BJ (cell line): ENCODE measurements at regions of chr19 and their contacts with region 1.

Region 1: GRCh38 chr19:4889034-4889815 is 13.5 kb downstream of the ARRDC5 start:
- DNase-seq: peak; percentile 38
- H3K4me3 ChIP-seq: no peak overlapping the region
- H3K27me3 ChIP-seq: no peaks in the 10 kb centered on the region
- CTCF ChIP-seq: no peak

Region 2: GRCh38 chr19:4534836-4535658 is 354.2 kb before region 1 on chr19 and contains the start of gene PLIN5:
- CTCF ChIA-PET with region 1: no interaction called
- POLR2A ChIA-PET with region 1: no interaction called
- DNase-seq: no peak
- H3K4me3 ChIP-seq: no peak within 1 kb of the TSS; the same call in 1 of the 2 replicates
- H3K27me3 ChIP-seq: peaks cover 7% of the 10 kb centered on the region
- CTCF ChIP-seq: no peak
- polyA plus RNA-seq, gene PLIN5: not detected in 2 replicates

Region 3: DNA sequence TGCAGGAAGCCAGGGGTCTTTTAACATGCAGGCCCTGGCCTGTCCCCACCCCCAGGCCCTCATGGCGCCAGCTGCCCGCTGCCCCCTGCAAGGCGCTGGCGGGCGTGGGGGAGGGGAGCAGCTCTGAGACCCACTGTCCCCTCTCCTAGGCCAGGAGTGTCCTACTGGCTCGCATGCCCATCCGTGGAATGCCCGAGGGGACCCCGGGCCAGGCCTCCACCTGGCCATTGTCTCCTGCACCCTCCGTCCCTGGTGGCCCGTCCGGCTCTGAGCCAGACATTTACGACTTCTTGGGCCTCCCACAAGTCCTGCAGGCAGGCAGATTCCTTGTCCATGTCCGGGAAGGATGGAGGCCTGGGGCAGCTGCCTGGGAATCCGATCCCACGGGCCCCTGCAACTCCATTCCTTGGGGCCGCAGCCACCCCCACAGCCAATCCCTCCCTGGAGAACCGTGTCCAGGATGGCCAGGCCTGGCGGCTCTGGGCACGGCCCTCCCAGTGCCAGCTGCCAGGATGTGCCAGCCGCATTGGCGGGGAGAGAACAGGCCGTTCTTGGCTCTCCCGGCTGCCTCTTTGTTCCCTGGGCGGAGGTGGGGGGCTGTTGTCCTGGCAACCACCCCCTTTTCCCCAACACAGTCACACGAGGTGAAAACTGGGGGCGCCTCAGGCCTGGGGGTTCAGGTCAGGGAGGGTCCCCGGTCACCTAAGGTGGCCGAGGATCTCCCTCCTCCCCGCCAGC is 11.3 kb before region 1 on chr19:
- CTCF ChIA-PET with region 1: no interaction called
- POLR2A ChIA-PET with region 1: interaction called, 16 read pairs
- DNase-seq: no peak
- H3K4me3 ChIP-seq: no peak overlapping the region
- H3K27me3 ChIP-seq: no peaks in the 10 kb centered on the region
- CTCF ChIP-seq: no peak